ENCODE measurements at regions of chr16 and their contacts with region 1.

Region 1: GRCh38 chr16:67091906-67092566 is 17.7 kb upstream of the PHAF1 start:
- DNase-seq: no peak
- H3K4me3 ChIP-seq: no peak overlapping the region
- H3K27ac ChIP-seq: no peak overlapping the region
- H3K4me1 ChIP-seq: no peaks in the 10 kb centered on the region
- H3K27me3 ChIP-seq: no peaks in the 10 kb centered on the region
- CTCF ChIP-seq: no peak
- EP300 ChIP-seq: no peak
- POLR2A ChIP-seq: no peak

Region 2: DNA sequence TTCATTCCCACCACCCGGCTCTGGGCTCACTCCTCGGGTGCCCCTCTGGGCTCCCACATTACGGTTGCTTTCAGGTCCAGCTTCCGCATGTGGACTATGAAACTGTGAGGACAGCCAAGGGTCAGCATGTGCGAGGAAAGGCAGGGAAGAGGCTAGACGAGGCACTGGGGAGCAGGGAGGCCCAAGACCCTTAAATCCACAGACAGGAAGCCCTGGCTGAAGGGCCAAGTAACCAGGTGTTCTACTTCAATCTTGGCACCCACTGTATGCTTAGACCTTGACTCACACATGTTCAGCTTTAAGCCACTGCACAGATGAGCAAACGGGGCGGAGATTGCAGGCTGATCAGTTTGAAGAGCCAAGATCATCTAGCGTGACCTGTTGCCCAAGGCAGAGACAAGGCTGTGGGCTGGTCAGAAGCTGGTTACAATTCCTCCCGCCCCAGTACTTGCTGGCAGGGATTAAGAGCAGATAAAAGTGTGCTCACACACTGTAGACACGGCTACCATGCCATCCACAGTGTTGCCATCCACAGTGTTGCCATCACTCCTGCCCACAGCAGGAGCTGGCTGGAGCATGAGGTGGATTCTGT is 103.7 kb before region 1 on chr16 and contains the start of gene CES4A:
- in situ Hi-C with region 1: loop called in 1 of 4 experiments (anchors 10 kb)
- intact Hi-C with region 1: no loop called
- DNase-seq: no peak
- H3K4me3 ChIP-seq: no peak within 1 kb of the TSS
- H3K27ac ChIP-seq: no peak within 1 kb of the TSS
- H3K4me1 ChIP-seq: no peaks in the 10 kb centered on the region
- H3K27me3 ChIP-seq: no peaks in the 10 kb centered on the region
- CTCF ChIP-seq: no peak
- EP300 ChIP-seq: no peak
- POLR2A ChIP-seq: no peak
- total RNA-seq, gene CES4A: 9.7 to 24.7 (median 15.7) TPM

Region 3: GRCh38 chr16:67105881-67106280 is 13.8 kb after region 1 on chr16:
- in situ Hi-C with region 1: no loop called
- intact Hi-C with region 1: loop called (anchors 1 kb)
- DNase-seq: no peak
- H3K4me3 ChIP-seq: no peak overlapping the region
- H3K27ac ChIP-seq: peak overlapping the region; percentile 65 to 71 (median 66)
- H3K4me1 ChIP-seq: peaks cover 4 to 31% (median 15%) of the 10 kb centered on the region in 4 donors
- H3K27me3 ChIP-seq: no peaks in the 10 kb centered on the region
- CTCF ChIP-seq: no peak
- EP300 ChIP-seq: no peak
- POLR2A ChIP-seq: no peak